CD14-positive monocyte (primary cell): ENCODE measurements at regions of chr22 and their contacts with region 1.

Region 1: GRCh38 chr22:19463496-19464469 is 15.2 kb downstream of the UFD1 start:
- DNase-seq: no peak
- H3K4me3 ChIP-seq: no peak overlapping the region
- H3K4me3 Mint-ChIP-seq: no peak overlapping the region
- H3K27ac ChIP-seq: no peak overlapping the region
- H3K27ac Mint-ChIP-seq: no peak overlapping the region
- H3K4me1 ChIP-seq: no peaks in the 10 kb centered on the region
- H3K4me1 Mint-ChIP-seq: no peaks in the 10 kb centered on the region
- H3K27me3 ChIP-seq: no peaks in the 10 kb centered on the region
- H3K27me3 Mint-ChIP-seq: peaks cover 0 to 2% (median 0%) of the 10 kb centered on the region in 3 donors
- CTCF ChIP-seq: no peak

Region 2: DNA sequence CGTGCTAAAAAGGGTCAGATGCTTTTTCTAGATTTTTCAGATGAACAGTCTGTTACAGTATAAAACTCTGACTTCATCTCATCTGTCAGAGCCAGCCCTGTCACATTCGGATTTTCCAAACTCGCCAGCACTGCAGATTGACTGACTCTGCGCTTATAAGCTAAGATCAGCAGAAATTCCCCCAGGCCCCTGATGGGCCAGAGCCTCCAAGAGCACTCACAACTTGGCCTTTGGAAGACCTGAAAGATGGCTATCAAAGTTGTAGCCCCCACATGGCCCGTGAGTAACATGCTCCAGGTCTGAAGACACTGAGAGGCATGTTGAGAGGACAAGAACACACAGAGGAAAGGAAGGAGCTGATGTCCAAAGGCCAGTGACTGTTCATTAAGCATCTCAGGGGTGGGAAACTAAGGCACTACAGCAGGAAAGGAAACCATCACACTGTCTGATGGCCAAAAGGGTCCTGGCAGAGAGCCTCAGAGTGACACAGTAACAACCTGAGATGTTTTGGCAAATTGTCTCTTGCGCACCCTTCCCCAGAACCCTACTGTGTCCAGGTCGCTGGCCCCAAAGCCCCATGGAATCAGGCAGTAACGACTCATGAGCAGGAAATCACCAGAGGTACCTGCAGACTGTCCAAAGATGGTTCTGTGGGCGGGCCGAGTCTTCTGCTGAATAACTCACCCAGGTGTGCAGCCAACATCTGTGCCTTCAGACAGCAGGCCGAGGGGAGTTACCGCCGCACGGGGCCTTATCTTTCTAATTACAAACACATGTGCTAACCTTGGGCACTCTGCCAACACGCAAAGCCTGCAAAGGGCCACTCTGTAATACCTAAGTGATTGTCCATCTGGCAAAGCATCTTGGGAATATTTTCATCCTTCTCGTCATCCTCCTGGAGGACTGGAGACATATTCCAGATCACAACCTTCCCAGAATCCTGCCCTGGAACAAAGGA is 55.9 kb before region 1 on chr22:
- intact Hi-C with region 1: loop called in 1 of 2 experiments (anchors 10 kb)
- DNase-seq: no peak
- H3K4me3 ChIP-seq: no peak overlapping the region
- H3K4me3 Mint-ChIP-seq: no peak overlapping the region
- H3K27ac ChIP-seq: no peak overlapping the region
- H3K27ac Mint-ChIP-seq: peak overlapping the region in 2 of 7 donors; percentile 5 to 55
- H3K4me1 ChIP-seq: no peaks in the 10 kb centered on the region
- H3K4me1 Mint-ChIP-seq: no peaks in the 10 kb centered on the region
- H3K27me3 ChIP-seq: no peaks in the 10 kb centered on the region
- H3K27me3 Mint-ChIP-seq: peaks cover 0 to 1% (median 0%) of the 10 kb centered on the region in 3 donors
- CTCF ChIP-seq: no peak